ENCODE measurements at regions of chr5 and their contacts with region 1.

Region 1: DNA sequence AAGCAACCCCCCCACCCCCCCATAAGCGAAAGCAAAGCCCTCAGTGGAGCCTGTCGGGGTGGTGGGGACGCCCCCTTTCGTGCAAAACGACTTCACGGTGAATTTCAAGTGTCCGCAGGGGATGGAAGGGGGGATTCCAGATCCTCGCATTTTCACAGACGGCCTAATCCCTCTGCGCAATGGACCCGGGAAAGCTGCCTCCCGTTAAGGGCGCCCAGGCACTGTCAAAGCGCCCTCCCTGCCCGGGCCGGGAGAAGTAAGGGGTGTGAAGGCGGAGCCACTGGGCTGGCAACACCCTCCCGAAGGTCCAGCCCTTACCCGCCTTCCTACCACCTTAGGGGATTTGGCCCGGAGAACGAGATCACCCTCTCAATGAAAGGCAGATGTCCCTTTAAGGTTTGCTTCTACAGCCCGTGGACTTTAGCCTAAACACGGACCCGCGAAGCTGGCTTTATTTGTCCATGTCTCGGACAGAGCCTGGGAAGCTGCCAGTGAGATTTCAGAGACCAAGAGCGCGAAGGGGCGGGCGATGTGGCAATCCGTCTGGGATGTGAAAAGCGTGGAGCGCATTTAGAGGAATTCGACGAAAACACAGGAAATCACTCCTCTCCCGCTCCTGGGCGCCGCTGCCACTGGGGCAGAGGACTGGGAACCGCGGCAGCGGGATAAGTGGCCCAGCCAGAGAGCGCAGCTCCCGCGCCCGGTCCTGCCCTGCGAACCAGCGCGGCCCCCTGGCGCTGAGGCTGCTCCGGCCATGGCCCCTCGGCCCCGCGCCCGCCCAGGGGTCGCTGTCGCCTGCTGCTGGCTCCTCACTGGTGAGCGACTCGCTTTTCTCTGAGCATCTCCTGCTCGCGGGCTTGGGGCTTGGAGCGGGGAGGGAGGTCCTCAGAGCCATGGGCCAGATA is at the starts of genes ITGA1 and PELO:
- DNase-seq: peak; percentile 65
- H3K4me3 ChIP-seq: peak within 1 kb of the TSS; percentile 67
- H3K27ac ChIP-seq: peak within 1 kb of the TSS; percentile 30
- H3K4me1 ChIP-seq: peaks cover 29% of the 10 kb centered on the region
- H3K27me3 ChIP-seq: no peaks in the 10 kb centered on the region
- CTCF ChIP-seq: no peak; the same call in 1 of the 2 replicates
- total RNA-seq, gene ITGA1: 3.0 and 4.0 TPM in 2 replicates
- total RNA-seq, gene PELO: 19.8 and 21.5 TPM in 2 replicates

Region 2: GRCh38 chr5:52799983-52800393 is 12.1 kb after region 1 on chr5:
- CTCF ChIA-PET with region 1: no interaction called
- POLR2A ChIA-PET with region 1: interaction called, 6 read pairs
- intact Hi-C with region 1: loop called (anchors 1 kb)
- DNase-seq: peak; percentile 81 to 93
- H3K4me3 ChIP-seq: peak overlapping the region; percentile 68
- H3K27ac ChIP-seq: peak overlapping the region; percentile 99
- H3K4me1 ChIP-seq: peaks cover 39% of the 10 kb centered on the region
- H3K27me3 ChIP-seq: no peaks in the 10 kb centered on the region
- CTCF ChIP-seq: no peak

Region 3: GRCh38 chr5:52915176-52915875 is 127.5 kb after region 1 on chr5:
- CTCF ChIA-PET with region 1: interaction called, 8 read pairs
- POLR2A ChIA-PET with region 1: no interaction called
- intact Hi-C with region 1: loop called (anchors 1 kb)
- DNase-seq: peak; percentile 53 to 58
- H3K4me3 ChIP-seq: peak overlapping the region; percentile 53; the same call in 1 of the 2 replicates
- H3K27ac ChIP-seq: no peak overlapping the region
- H3K4me1 ChIP-seq: no peaks in the 10 kb centered on the region
- H3K27me3 ChIP-seq: no peaks in the 10 kb centered on the region
- CTCF ChIP-seq: peak; percentile 91

Region 4: GRCh38 chr5:53095931-53096525 is 308.2 kb after region 1 on chr5:
- CTCF ChIA-PET with region 1: no interaction called
- POLR2A ChIA-PET with region 1: no interaction called
- intact Hi-C with region 1: loop called (anchors 5 kb)
- DNase-seq: peak; percentile 49 to 50
- H3K4me3 ChIP-seq: no peak overlapping the region
- H3K27ac ChIP-seq: no peak overlapping the region
- H3K4me1 ChIP-seq: peaks cover 4% of the 10 kb centered on the region; the same call in 1 of the 2 replicates
- H3K27me3 ChIP-seq: no peaks in the 10 kb centered on the region
- CTCF ChIP-seq: peak; percentile 90

Region 5: DNA sequence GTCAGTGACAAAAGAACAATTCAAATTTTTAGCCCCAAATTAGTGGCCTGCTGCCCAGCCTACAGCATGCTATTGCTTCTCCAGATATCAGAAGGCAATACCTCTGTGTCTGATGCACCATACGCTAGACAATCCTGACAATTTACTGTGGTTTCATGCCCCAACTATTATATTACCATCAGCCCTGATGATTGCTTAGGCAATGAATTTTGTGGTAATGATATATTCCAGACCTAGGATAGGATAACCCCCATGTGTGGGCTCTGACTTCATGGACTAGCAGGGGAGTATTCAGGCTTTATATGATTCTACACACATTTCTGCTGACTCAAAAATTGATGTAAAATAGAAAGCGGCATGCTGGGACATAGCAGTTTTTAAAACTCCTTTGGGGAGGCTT is 523.8 kb after region 1 on chr5:
- CTCF ChIA-PET with region 1: no interaction called
- POLR2A ChIA-PET with region 1: no interaction called
- intact Hi-C with region 1: no loop called
- DNase-seq: no peak
- H3K4me3 ChIP-seq: no peak overlapping the region
- H3K27ac ChIP-seq: no peak overlapping the region
- H3K4me1 ChIP-seq: no peaks in the 10 kb centered on the region
- H3K27me3 ChIP-seq: no peaks in the 10 kb centered on the region
- CTCF ChIP-seq: no peak